ENCODE measurements at regions of chr11 and their contacts with region 1.

Region 1: GRCh38 chr11:46238967-46239800 is 38.3 kb upstream of the CREB3L1 start:
- DNase-seq: peak; percentile 85
- H3K4me3 Mint-ChIP-seq: peak overlapping the region; percentile 69
- H3K27ac Mint-ChIP-seq: peak overlapping the region; percentile 37
- H3K4me1 Mint-ChIP-seq: peaks cover 50% of the 10 kb centered on the region
- H3K27me3 Mint-ChIP-seq: peaks cover 10% of the 10 kb centered on the region

Region 2: GRCh38 chr11:45930031-45930794 is 309.0 kb before region 1 on chr11:
- CTCF ChIA-PET with region 1: no interaction called
- POLR2A ChIA-PET with region 1: no interaction called
- DNase-seq: peak; percentile 73
- H3K4me3 Mint-ChIP-seq: peak overlapping the region; percentile 50
- H3K27ac Mint-ChIP-seq: peak overlapping the region; percentile 95
- H3K4me1 Mint-ChIP-seq: peaks cover 35% of the 10 kb centered on the region
- H3K27me3 Mint-ChIP-seq: no peaks in the 10 kb centered on the region

Region 3: DNA sequence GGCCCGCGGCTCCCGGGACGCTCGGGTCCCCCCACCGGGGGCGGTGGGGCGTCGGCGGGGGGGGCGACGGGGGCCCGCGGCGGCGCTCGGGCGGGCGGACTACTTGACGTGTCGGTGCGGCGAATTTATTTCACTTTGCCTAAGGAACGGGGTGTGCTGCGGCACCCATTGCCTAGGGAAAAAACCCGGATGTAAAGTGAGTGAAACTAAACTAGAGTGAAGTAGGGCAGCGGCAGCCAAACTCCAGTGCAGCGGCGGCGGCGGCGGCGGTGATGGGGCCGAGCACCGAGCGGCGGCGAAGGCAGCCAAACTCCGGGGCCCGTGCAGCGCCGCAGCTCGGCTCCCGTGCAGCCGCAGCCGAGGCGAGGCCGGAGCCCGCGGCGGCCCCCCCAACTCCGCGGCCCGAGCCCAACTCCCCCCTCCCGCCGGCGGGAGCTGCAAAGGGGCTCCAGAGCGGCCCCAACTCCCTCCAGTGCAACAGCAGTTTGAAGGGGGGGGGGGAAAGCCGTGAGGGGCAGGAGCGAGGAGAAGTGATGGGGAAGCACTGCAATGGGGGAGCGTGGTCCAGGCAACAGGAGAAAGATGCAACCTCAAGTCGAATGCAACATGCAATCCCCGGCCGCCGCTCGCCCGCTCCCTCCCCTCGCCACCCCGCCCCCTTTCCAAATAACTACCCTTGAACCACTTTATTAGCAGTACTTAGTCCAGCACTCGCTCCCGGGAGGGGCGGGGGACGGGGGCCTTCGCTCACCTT is 117.3 kb before region 1 on chr11:
- CTCF ChIA-PET with region 1: interaction called, 14 read pairs
- POLR2A ChIA-PET with region 1: interaction called, 8 read pairs
- DNase-seq: peak; percentile 80
- H3K4me3 Mint-ChIP-seq: peak overlapping the region; percentile 89
- H3K27ac Mint-ChIP-seq: peak overlapping the region; percentile 89
- H3K4me1 Mint-ChIP-seq: peaks cover 41% of the 10 kb centered on the region
- H3K27me3 Mint-ChIP-seq: no peaks in the 10 kb centered on the region

Region 4: DNA sequence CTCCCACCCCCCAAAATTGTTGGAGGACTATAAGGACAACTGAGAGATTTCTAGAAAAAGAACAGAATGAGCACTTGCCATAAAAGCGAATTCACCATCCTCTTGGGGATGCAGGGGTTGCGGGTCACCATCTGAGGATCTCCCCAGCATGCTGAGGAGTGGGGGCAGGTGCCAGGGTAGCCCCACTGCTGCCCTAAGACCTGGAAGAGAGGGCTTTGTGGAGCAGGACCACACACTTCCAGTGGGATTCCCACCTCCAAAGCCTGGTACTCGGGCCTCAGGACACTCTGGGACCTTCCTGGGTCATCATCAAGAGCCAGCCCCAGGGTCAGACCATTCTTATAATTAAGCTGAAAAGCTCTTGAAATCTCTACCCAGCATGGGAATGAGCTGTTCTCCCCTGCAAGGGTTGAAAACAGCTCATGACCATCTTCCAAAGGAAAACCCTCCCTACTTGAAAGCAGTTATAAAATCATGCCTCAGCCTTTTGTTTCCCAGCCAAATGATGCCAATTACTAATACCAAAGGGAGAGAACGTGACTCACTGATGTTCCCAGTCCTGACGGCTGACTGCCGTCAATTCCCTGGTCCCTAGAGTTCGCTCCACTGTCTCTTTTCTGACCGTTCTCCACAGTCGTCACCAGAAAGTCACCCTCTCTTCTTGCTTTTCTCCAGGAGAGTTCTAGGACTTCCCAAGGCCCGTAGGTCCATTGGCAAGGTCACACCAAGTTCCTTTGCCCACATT is 38.5 kb before region 1 on chr11:
- CTCF ChIA-PET with region 1: no interaction called
- POLR2A ChIA-PET with region 1: no interaction called
- DNase-seq: no peak
- H3K4me3 Mint-ChIP-seq: no peak overlapping the region
- H3K27ac Mint-ChIP-seq: no peak overlapping the region
- H3K4me1 Mint-ChIP-seq: no peaks in the 10 kb centered on the region
- H3K27me3 Mint-ChIP-seq: peaks cover 50% of the 10 kb centered on the region

Region 5: GRCh38 chr11:46295312-46296058 is 56.3 kb after region 1 on chr11:
- CTCF ChIA-PET with region 1: interaction called, 13 read pairs
- POLR2A ChIA-PET with region 1: interaction called, 5 read pairs
- DNase-seq: peak; percentile 70
- H3K4me3 Mint-ChIP-seq: peak overlapping the region; percentile 65
- H3K27ac Mint-ChIP-seq: no peak overlapping the region
- H3K4me1 Mint-ChIP-seq: peaks cover 22% of the 10 kb centered on the region
- H3K27me3 Mint-ChIP-seq: peaks cover 30% of the 10 kb centered on the region

Region 6: DNA sequence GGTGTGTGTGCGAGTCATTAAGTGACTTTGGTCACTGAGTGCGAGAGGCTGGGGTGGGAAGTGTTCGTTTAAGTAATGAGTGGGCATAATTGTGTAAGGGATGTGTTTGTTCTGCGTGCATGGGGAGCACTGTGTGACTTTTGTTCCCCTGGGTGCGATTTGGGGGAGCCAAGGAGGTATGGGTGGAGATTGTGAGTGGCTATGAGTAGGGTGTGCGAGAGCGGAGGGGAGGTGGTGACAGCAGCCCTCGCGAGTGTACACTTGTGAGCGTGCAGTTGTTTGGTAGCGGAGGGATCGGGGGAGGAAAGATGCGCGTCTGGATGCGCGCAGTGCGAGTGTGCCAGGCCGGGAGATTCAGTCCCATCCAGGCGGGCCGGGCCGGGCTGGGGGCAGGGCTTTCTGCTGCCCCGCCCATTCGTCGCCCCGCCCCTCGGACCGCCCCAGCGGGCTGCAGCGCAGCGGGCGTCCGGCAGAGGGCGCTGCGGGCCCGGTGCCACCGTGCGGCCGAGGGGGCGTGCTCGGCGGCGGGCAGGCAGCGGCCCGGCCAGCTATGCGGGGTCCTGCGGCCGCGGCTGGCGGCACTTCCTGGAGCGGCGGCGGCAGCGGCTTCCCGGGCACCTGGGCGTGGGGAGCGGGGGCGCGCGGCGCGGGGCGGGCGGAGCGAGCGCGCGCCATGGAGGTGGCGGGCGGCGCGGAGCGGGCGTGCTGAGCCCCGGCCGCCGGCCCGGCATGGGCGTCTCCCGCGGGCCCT is 107.9 kb after region 1 on chr11 and contains the start of gene DGKZ:
- CTCF ChIA-PET with region 1: interaction called, 28 read pairs
- POLR2A ChIA-PET with region 1: interaction called, 12 read pairs
- DNase-seq: peak; percentile 91
- H3K4me3 Mint-ChIP-seq: peak within 1 kb of the TSS; percentile 90
- H3K27ac Mint-ChIP-seq: peak within 1 kb of the TSS; percentile 97
- H3K4me1 Mint-ChIP-seq: peaks cover 66% of the 10 kb centered on the region
- H3K27me3 Mint-ChIP-seq: peaks cover 13% of the 10 kb centered on the region
- total RNA-seq, gene DGKZ: 141 to 143 TPM

Region 7: GRCh38 chr11:46529095-46529905 is 290.1 kb after region 1 on chr11:
- CTCF ChIA-PET with region 1: interaction called, 10 read pairs
- POLR2A ChIA-PET with region 1: no interaction called
- DNase-seq: peak; percentile 76
- H3K4me3 Mint-ChIP-seq: no peak overlapping the region
- H3K27ac Mint-ChIP-seq: peak overlapping the region; percentile 12
- H3K4me1 Mint-ChIP-seq: peaks cover 23% of the 10 kb centered on the region
- H3K27me3 Mint-ChIP-seq: no peaks in the 10 kb centered on the region